Ascending aorta (tissue), 2 donors: ENCODE measurements at regions of chr5 and their contacts with region 1.

Region 1: GRCh38 chr5:87010736-87011135 is 256.9 kb upstream of the RASA1 start:
- DNase-seq: no peak
- H3K4me3 ChIP-seq: no peak overlapping the region
- H3K27ac ChIP-seq: no peak overlapping the region
- H3K4me1 ChIP-seq: no peaks in the 10 kb centered on the region
- H3K27me3 ChIP-seq: no peaks in the 10 kb centered on the region
- CTCF ChIP-seq: no peak

Region 2: DNA sequence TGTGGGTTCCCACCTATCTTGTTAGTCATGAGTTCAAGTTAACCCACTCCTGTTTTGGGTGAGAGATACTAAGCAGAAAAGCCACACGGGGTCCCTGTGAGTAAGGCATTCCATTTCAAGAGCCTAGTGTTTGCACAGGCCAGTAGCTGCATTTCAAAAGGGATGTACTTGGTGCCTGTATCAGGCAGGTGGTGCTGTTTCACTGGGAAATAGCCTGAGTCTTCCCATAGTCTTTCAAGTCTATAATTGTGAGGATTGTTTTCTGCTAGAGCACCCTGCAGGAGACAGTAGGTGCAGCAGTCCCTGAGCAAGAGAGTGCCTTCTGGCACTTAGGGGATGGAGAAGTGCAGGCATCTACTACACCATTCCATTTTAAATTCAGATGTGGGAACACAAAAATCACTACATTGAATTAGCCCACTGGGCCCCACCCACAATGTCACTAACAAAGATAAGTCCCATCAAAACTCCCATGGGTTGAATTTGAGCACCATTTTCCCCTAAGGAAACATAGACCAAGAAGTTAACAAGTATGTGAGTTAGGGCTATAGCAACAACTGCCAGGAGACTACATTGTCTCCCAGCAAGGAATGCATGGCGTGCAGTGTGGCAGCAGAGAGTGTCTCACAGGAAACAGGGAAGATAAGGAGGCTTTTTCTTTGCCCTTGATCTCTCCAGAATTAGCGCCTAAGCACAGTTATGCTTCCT is 129.8 kb before region 1 on chr5:
- intact Hi-C with region 1: loop called (anchors 5 kb)
- DNase-seq: no peak
- H3K4me3 ChIP-seq: no peak overlapping the region
- H3K27ac ChIP-seq: no peak overlapping the region
- H3K4me1 ChIP-seq: peaks cover 0 to 2% of the 10 kb centered on the region in 2 donors
- H3K27me3 ChIP-seq: no peaks in the 10 kb centered on the region
- CTCF ChIP-seq: peak; percentile 14 to 46 (median 27)

Region 3: DNA sequence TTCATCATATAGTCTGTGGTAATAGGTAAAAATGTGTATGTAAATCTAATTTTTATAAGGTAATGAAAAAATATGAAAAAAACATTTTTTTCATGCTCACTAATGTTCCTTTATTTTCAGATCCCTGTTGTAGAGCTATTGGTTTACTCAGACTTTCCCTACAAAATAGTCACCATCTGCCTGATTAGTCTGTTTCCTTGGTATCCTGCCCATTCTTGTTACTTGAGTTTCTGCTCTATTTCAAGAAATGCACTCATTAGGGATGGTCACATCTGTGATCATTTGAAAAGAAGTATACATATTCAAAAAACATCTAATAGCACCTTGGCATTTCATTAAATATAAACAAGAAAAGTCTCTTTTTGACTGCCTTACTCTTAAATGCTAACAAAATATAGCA is 235.3 kb after region 1 on chr5:
- intact Hi-C with region 1: no loop called
- DNase-seq: no peak
- H3K4me3 ChIP-seq: no peak overlapping the region
- H3K27ac ChIP-seq: no peak overlapping the region
- H3K4me1 ChIP-seq: peaks cover 0 to 3% of the 10 kb centered on the region in 2 donors
- H3K27me3 ChIP-seq: no peaks in the 10 kb centered on the region
- CTCF ChIP-seq: no peak